Activated CD4-positive, alpha-beta T cell treated with anti-CD3 and anti-CD28 coated beads, Interleukin-2, amount 10 ng/mL, durations not matched to agents 24 days and 14 days (primary cell): ENCODE measurements at regions of chr14 and their contacts with region 1.

Region 1: GRCh38 chr14:61719344-61720293 is 24.3 kb downstream of the HIF1A start:
- DNase-seq: no peak
- H3K4me3 Mint-ChIP-seq: peak overlapping the region; percentile 70
- H3K27ac Mint-ChIP-seq: peak overlapping the region; percentile 59
- H3K4me1 Mint-ChIP-seq: peaks cover 58% of the 10 kb centered on the region
- H3K27me3 Mint-ChIP-seq: no peaks in the 10 kb centered on the region

Region 2: GRCh38 chr14:61703342-61704129 is 16.1 kb before region 1 on chr14:
- intact Hi-C with region 1: loop called (anchors 2 kb)
- DNase-seq: no peak
- H3K4me3 Mint-ChIP-seq: peak overlapping the region; percentile 43
- H3K27ac Mint-ChIP-seq: peak overlapping the region; percentile 77
- H3K4me1 Mint-ChIP-seq: peaks cover 67% of the 10 kb centered on the region
- H3K27me3 Mint-ChIP-seq: no peaks in the 10 kb centered on the region